Activated CD8-positive, alpha-beta T cell treated with anti-CD3 and anti-CD28 coated beads for 36 hours (primary cell): ENCODE measurements at regions of chr12 and their contacts with region 1.

Region 1: DNA sequence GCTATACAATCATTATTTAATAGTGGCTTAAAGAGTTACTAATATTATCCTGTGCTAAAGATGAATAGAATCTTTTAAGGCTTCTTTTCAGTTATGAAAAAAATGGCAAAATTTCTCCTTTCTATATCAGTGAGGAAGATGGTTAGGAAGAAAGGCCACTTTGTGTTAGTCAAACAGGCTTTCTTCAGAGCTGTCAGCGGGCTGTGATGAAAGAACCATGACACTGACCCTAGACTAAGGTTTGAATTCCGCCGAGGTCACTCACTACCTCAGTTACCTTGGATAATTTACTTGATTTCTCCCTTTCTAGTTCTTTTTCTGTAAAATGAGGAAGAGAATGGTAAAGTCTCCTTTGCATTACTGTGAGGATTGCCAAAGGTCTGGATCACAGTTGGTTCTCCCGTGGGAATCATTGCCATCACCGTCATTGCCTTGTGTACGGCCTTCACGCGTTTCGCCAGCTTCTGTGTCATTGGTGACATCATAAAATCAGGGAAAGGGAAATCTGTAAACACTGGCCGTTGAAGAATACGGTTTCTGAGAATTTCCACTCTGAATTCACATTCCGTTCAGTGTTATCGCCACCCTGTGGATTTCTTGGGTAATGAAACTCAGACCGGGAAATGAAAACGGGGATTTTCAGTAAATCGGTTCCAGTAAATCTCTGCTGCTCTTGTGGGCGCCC is 26.7 kb upstream of the YBX3 start:
- DNase-seq: peak; percentile 85
- ATAC-seq: peak; percentile 99
- H3K4me3 Mint-ChIP-seq: peak overlapping the region; percentile 67
- H3K27ac Mint-ChIP-seq: peak overlapping the region; percentile 22
- H3K4me1 Mint-ChIP-seq: peaks cover 8% of the 10 kb centered on the region
- H3K27me3 Mint-ChIP-seq: peaks cover 28% of the 10 kb centered on the region
- CTCF ChIP-seq: peak; percentile 95

Region 2: GRCh38 chr12:10690906-10691305 is 58.9 kb before region 1 on chr12:
- CTCF ChIA-PET with region 1: interaction called, 11 read pairs
- POLR2A ChIA-PET with region 1: no interaction called
- intact Hi-C with region 1: no loop called
- DNase-seq: no peak
- ATAC-seq: no peak
- H3K4me3 Mint-ChIP-seq: no peak overlapping the region
- H3K27ac Mint-ChIP-seq: no peak overlapping the region
- H3K4me1 Mint-ChIP-seq: no peaks in the 10 kb centered on the region
- H3K27me3 Mint-ChIP-seq: peaks cover under 1% of the 10 kb centered on the region
- CTCF ChIP-seq: no peak

Region 3: GRCh38 chr12:10716704-10717315 is 33.0 kb before region 1 on chr12:
- CTCF ChIA-PET with region 1: interaction called, 28 read pairs
- POLR2A ChIA-PET with region 1: no interaction called
- intact Hi-C with region 1: no loop called
- DNase-seq: no peak
- ATAC-seq: no peak
- H3K4me3 Mint-ChIP-seq: no peak overlapping the region
- H3K27ac Mint-ChIP-seq: no peak overlapping the region
- H3K4me1 Mint-ChIP-seq: peaks cover 56% of the 10 kb centered on the region
- H3K27me3 Mint-ChIP-seq: no peaks in the 10 kb centered on the region
- CTCF ChIP-seq: no peak

Region 4: GRCh38 chr12:10732549-10732948 is 17.3 kb before region 1 on chr12:
- CTCF ChIA-PET with region 1: interaction called, 22 read pairs
- POLR2A ChIA-PET with region 1: no interaction called
- intact Hi-C with region 1: no loop called
- DNase-seq: no peak
- ATAC-seq: no peak
- H3K4me3 Mint-ChIP-seq: no peak overlapping the region
- H3K27ac Mint-ChIP-seq: no peak overlapping the region
- H3K4me1 Mint-ChIP-seq: peaks cover 5% of the 10 kb centered on the region
- H3K27me3 Mint-ChIP-seq: peaks cover 11% of the 10 kb centered on the region
- CTCF ChIP-seq: no peak

Region 5: DNA sequence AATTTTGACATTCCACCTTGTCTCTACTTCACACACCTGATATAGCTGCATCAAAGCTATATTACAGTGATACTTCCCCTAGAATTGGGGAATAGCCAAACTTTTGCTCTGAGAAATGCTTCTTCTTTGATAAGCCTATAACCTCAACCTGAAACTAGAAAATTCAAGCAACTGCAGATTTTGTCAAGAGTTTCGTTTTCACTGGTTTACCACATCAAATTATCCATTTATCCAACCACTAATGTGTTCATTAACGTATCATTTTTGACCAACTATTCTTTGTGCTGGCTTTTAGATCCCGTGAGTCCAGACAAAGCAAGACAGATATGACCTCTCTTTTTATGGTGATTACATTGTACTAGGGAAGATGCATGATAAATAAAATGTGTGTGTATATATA is 325.8 kb after region 1 on chr12:
- CTCF ChIA-PET with region 1: no interaction called
- POLR2A ChIA-PET with region 1: no interaction called
- intact Hi-C with region 1: no loop called
- DNase-seq: no peak
- ATAC-seq: no peak
- H3K4me3 Mint-ChIP-seq: no peak overlapping the region
- H3K27ac Mint-ChIP-seq: no peak overlapping the region
- H3K4me1 Mint-ChIP-seq: peaks cover 4% of the 10 kb centered on the region
- H3K27me3 Mint-ChIP-seq: no peaks in the 10 kb centered on the region
- CTCF ChIP-seq: no peak